Gastrocnemius medialis (tissue), 4 donors: ENCODE measurements at regions of chr3 and their contacts with region 1.

Region 1: GRCh38 chr3:148955544-148956346 is 35.6 kb upstream of the GYG1 start:
- DNase-seq: peak; percentile 39 to 63
- ATAC-seq: peak; percentile 90 to 93
- H3K4me3 ChIP-seq: peak overlapping the region in 1 of 4 donors; percentile 6
- H3K27ac ChIP-seq: peak overlapping the region; percentile 87 to 92 (median 89)
- H3K4me1 ChIP-seq: peaks cover 23 to 28% of the 10 kb centered on the region in 2 donors
- H3K27me3 ChIP-seq: no peaks in the 10 kb centered on the region
- CTCF ChIP-seq: peak; percentile 31 to 67 (median 54)
- POLR2A ChIP-seq: peak in 1 of 2 donors; percentile 21

Region 2: DNA sequence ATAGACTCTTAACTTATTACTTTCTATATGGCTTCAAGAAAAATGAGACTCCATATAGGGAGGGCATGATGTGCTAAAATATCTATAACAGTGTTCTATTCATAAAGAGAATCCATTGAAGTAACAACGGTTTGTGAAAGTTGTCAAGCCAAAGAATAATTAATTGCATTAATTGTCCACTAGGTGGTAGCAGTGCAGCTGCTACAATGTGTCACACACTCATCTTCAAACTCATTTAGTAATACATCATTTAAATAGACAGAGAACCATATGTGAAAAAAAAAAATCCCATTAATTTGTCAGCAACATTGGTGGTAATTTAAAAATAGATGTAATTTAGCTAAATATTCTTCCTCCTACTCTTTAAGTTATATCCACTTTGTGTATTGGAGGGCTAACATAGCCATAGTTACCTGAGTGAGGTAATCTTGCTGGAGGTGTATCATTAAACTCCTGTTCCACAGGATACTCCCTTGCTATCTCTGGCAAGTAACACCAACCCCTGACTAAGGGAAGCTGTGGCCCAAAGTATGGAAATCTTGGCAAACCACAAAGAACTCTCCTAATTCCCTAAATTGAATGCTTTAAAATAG is 94.4 kb before region 1 on chr3:
- in situ Hi-C with region 1: loop called in 1 of 4 experiments (anchors 5 kb)
- intact Hi-C with region 1: no loop called
- DNase-seq: no peak
- ATAC-seq: peak; percentile 72 to 78
- H3K4me3 ChIP-seq: no peak overlapping the region
- H3K27ac ChIP-seq: no peak overlapping the region
- H3K4me1 ChIP-seq: peaks cover 5% of the 10 kb centered on the region in 2 donors
- H3K27me3 ChIP-seq: no peaks in the 10 kb centered on the region
- CTCF ChIP-seq: peak; percentile 63 to 83 (median 78)
- POLR2A ChIP-seq: no peak

Region 3: GRCh38 chr3:148991194-148992026 is 35.7 kb after region 1 on chr3 and contains the start of gene GYG1:
- in situ Hi-C with region 1: no loop called
- intact Hi-C with region 1: loop called (anchors 2 kb)
- DNase-seq: peak; percentile 81 to 89
- ATAC-seq: peak; percentile 74 to 75
- H3K4me3 ChIP-seq: peak within 1 kb of the TSS; percentile 77 to 99 (median 96)
- H3K27ac ChIP-seq: peak within 1 kb of the TSS; percentile 98 to 100 (median 100)
- H3K4me1 ChIP-seq: peaks cover 17 to 25% of the 10 kb centered on the region in 2 donors
- H3K27me3 ChIP-seq: no peaks in the 10 kb centered on the region
- CTCF ChIP-seq: peak in 4 of 5 experiments; percentile 23 to 53 (median 35)
- POLR2A ChIP-seq: peak; percentile 98 to 99
- total RNA-seq, gene GYG1: 298 to 526 (median 331) TPM

Region 4: DNA sequence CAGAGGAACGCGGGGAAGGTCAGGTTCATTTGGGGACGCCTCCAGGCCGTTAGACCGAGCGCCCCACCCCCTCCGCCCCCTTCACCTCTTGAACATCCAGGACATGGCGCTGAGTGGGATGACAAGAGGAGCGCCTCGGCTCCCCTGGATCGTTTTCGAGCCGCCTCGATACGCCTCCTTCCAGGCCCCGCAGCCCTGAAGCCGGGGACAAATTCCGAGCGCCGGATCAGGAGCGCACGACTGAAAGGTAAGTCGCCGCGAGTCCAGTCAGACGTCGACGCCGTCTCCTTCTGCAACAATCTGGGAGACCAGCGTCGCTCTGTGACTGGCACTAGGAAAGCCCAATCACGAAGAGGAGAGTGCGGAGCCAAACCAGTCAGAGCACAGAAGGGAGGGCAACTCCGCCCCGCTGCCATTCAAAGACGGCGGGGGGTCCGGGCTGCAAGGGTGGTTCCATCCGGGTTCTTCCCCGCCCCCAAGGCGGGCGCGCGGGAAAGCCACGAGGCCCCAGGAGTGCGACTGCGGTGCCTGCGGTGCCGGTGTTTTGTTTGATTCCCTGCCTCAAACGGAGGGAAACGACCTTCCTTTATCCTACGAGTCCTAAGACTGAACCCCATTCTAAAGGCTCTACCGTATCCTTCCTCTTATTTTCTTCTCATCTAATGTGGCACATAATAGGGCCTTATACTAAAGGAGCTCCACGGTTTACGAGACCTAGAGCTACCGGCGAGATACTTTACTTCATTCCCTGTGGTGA is 130.7 kb after region 1 on chr3 and contains the start of gene HLTF:
- in situ Hi-C with region 1: no loop called
- intact Hi-C with region 1: loop called (anchors 10 kb)
- DNase-seq: peak; percentile 89 to 94
- ATAC-seq: peak; percentile 99 to 100
- H3K4me3 ChIP-seq: peak within 1 kb of the TSS; percentile 63 to 78 (median 70)
- H3K27ac ChIP-seq: peak within 1 kb of the TSS; percentile 78 to 83 (median 80)
- H3K4me1 ChIP-seq: peaks cover 10 to 11% of the 10 kb centered on the region in 2 donors
- H3K27me3 ChIP-seq: no peaks in the 10 kb centered on the region
- CTCF ChIP-seq: no peak
- POLR2A ChIP-seq: peak in 1 of 2 donors; percentile 70
- total RNA-seq, gene HLTF: 2.8 to 11.0 (median 5.9) TPM

Region 5: DNA sequence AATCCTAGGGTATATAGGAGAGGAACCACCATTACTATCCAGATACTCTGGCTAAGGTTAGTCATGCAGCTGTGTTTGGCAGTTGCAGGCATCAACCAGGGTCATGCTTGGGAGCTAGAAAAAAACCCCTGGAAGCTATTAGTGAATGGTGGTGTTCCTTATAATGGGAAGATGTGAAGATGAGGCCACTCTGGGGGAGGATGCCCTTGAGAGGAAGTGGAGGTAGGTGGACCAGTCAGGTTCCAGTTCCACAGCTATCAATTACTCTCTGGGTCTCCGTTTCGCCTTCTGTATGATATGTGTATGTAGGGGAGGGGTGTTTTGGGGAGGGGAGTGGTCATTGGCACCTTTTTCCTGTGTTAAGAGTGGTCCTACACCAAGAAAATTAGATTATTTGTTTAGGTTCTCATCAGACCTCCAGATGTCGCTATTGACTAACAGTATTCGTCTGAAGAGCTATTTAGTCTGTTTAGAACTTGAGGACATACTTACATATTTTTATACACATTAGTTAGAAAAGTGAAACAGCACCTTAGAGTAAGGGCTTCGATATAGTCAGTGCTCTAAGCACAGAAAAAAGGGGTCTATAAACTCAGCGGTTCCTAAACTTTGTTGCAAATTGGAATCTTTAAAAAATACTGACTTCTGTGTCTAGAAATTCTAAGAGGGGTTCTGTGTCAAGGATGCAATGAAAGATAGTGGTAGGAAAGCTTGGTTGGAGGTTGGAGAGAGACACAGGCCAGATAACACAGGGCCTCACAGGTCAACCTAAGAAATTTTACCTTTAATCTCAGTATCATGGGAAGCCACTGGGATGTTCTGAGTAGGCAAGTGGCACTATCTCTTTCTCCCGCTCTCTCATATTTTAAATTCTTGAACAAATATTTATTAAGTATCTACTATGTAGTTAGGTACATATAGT is 164.6 kb after region 1 on chr3:
- in situ Hi-C with region 1: loop called (anchors 10 kb)
- intact Hi-C with region 1: loop called (anchors 2 kb)
- DNase-seq: no peak
- ATAC-seq: peak; percentile 72 to 78
- H3K4me3 ChIP-seq: no peak overlapping the region
- H3K27ac ChIP-seq: no peak overlapping the region
- H3K4me1 ChIP-seq: no peaks in the 10 kb centered on the region
- H3K27me3 ChIP-seq: no peaks in the 10 kb centered on the region
- CTCF ChIP-seq: peak; percentile 48 to 74 (median 65)
- POLR2A ChIP-seq: no peak

Region 6: DNA sequence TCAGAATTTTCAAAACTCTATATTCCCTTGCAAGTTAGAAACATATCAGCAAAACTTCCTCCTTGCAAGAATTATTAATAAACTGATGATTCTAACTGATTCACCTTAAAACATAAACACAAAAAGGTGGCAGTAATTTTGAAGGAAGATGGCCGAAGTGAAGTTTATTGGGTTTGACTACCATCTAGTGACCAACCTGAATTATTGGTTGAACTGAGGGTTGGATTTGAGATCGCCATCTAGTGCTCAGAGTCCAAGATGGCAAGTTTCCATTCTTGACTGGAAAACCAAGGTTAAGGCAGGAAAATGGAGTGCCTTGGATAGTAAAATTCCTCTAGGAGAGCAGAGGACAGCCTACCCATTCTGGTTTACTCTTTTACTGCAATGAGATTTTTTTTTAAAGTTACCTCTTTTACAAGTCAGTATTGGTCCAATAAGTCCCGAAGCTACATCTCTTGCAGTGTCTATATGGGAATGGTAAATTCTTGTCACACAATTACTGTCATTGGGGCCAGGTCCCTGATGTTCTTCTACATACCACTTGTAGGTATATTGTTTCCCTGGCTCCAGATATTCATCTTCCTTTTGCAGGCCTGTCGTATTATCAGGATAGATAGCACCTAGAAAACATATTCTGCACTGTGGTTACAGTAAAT is 317.5 kb after region 1 on chr3:
- in situ Hi-C with region 1: loop called (anchors 5 to 10 kb)
- intact Hi-C with region 1: loop called (anchors 1 kb)
- DNase-seq: peak in 1 of 2 donors; percentile 20
- ATAC-seq: peak; percentile 95 to 96
- H3K4me3 ChIP-seq: no peak overlapping the region
- H3K27ac ChIP-seq: peak overlapping the region in 2 of 4 donors; percentile 23 to 51
- H3K4me1 ChIP-seq: peaks cover 0 to 5% of the 10 kb centered on the region in 2 donors
- H3K27me3 ChIP-seq: no peaks in the 10 kb centered on the region
- CTCF ChIP-seq: peak; percentile 77 to 96 (median 89)
- POLR2A ChIP-seq: no peak

Region 7: DNA sequence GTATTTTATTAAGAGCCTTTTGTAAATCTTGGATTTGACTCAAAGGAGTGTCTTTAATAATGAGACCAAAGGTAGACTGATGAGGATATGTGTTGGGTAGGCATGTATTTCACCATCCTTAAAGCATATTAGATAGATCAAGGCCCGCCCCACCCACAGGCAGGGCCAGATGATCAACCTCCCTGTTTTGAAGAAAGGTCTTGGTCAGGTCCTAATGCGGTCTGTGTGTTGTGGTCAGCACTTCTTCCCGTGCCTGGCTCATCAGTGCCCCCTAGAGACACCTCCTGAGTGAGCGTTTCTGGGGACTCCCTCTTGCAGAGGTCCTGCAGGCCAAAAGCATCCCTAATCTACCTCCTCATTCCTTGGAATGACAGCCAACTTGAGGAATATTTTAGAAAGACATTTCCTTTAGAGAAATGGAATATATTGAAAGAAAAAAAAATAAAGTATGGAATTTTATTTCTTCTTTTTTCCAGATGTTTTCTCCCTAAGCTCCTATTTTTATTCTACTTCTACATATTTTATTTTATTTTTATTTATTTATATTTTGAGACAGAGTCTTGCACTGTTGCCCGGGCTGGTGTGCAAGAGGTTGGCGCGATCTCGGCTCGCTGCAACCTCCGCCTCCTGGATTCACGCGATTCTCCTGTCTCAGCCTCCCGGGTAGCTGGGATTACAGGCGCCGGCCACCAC is 524.7 kb after region 1 on chr3:
- in situ Hi-C with region 1: loop called in 3 of 4 experiments (anchors 25 kb)
- intact Hi-C with region 1: loop called (anchors 10 kb)
- DNase-seq: peak; percentile 54 to 74
- ATAC-seq: peak; percentile 90 to 96
- H3K4me3 ChIP-seq: no peak overlapping the region
- H3K27ac ChIP-seq: peak overlapping the region; percentile 34 to 75 (median 52)
- H3K4me1 ChIP-seq: peaks cover 9 to 16% of the 10 kb centered on the region in 2 donors
- H3K27me3 ChIP-seq: no peaks in the 10 kb centered on the region
- CTCF ChIP-seq: peak; percentile 55 to 84 (median 70)
- POLR2A ChIP-seq: no peak